Ascending aorta (tissue), 2 donors: ENCODE measurements at regions of chr5 and their contacts with region 1.

Region 1: GRCh38 chr5:179821581-179822432 is 1.1 kb downstream of the SQSTM1 start:
- DNase-seq: peak; percentile 90 to 98
- H3K4me3 ChIP-seq: peak overlapping the region; percentile 84 to 98
- H3K27ac ChIP-seq: peak overlapping the region; percentile 98 to 100
- H3K4me1 ChIP-seq: peaks cover 34 to 47% of the 10 kb centered on the region in 2 donors
- H3K27me3 ChIP-seq: no peaks in the 10 kb centered on the region
- CTCF ChIP-seq: peak in 1 of 3 experiments; percentile 19

Region 2: DNA sequence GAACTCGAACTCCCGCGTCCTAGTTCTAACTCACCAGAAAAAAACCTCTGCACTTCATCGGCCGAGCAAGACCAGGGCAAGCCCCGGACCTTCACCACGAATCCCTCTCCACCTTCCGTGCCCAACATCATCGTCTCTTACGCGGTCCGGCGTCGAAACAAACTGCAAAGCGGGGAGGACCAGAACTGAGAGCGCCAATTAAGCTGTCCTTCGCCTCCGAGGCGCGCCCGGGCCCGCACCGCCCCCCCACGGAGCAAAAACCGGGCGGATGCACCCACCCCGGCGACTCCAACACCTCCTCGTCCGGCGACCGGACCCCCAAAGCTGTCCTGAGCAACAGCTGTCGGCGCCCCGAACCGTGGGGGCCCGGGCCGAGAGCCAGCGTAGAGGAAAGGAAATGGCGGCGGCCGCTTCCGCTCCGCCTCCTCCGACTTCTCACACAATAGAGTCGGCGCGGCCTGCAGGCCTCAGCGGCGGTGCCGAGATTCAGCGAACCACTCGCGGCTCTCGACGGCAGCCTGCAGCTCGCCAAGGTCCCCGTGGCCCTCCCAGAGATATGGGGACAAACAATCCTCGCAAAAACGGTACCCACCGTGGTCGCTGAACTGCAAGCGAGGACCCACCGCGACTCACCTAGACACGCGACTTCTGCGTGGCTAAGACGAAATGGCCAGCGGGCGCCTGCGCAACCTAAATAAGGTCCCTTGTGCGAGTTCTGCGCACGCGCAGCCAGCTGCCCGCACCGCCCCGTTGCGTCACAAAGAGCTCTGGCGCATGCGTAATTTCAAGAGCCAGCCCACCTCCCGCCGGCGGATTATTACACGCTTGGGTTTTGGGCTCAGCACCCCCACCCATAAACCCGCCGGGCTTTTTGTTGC is 198.6 kb before region 1 on chr5 and contains the start of gene HNRNPH1:
- intact Hi-C with region 1: loop called (anchors 2 kb)
- DNase-seq: peak; percentile 93 to 99
- H3K4me3 ChIP-seq: peak within 1 kb of the TSS; percentile 99 to 100
- H3K27ac ChIP-seq: peak within 1 kb of the TSS; percentile 100
- H3K4me1 ChIP-seq: peaks cover 0 to 40% of the 10 kb centered on the region in 2 donors
- H3K27me3 ChIP-seq: no peaks in the 10 kb centered on the region
- CTCF ChIP-seq: peak in 1 of 3 experiments; percentile 5
- total RNA-seq, gene HNRNPH1: 206 TPM

Region 3: GRCh38 chr5:179697993-179698934 is 123.5 kb before region 1 on chr5:
- intact Hi-C with region 1: loop called (anchors 5 kb)
- DNase-seq: peak; percentile 98 to 100
- H3K4me3 ChIP-seq: peak overlapping the region; percentile 90 to 94
- H3K27ac ChIP-seq: peak overlapping the region; percentile 98 to 99
- H3K4me1 ChIP-seq: peaks cover 0 to 11% of the 10 kb centered on the region in 2 donors
- H3K27me3 ChIP-seq: no peaks in the 10 kb centered on the region
- CTCF ChIP-seq: no peak

Region 4: DNA sequence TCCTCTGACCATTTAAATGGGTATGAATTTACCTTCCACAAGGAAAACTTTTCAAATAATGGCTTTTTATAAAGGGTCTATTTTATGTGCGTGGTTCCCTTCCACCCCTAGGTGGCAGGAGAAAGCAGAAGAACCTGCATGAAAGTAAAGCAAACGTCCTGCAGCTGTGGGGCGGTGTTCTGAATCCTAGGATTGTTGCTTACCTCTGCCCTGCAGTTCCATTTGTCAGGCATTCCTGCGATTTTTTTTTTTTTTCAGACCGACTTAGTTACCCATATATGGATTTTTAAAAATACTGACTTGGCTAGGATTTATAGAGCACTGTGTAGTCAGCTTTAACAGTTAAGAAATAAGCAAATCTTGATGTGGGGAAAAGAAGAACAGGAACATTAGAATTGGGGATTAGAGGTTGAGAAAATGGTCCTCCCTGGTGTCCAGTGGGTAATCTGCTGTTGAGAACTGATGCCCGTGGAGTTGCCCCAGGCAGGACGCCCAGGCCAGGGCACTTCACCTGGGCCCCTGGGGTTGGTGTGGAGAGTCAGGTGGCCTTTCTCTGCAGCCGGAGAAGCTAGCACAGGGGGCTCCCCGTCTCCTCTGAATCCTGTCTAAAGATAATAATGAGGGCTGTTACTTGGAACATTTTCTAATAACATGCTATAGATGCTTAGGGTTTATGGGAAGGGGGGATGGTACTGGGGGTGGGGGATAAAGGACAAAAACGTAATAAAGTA is 58.4 kb before region 1 on chr5:
- intact Hi-C with region 1: loop called (anchors 2 kb)
- DNase-seq: peak in 1 of 2 donors; percentile 90
- H3K4me3 ChIP-seq: peak overlapping the region in 1 of 2 donors; percentile 16
- H3K27ac ChIP-seq: peak overlapping the region; percentile 74 to 91
- H3K4me1 ChIP-seq: peaks cover 22 to 52% of the 10 kb centered on the region in 2 donors
- H3K27me3 ChIP-seq: no peaks in the 10 kb centered on the region
- CTCF ChIP-seq: peak; percentile 76 to 91 (median 89)

Region 5: GRCh38 chr5:179806250-179807222 is 15.3 kb before region 1 on chr5 and contains the start of gene MGAT4B:
- intact Hi-C with region 1: loop called (anchors 1 kb)
- DNase-seq: peak in 1 of 2 donors; percentile 84
- H3K4me3 ChIP-seq: peak within 1 kb of the TSS; percentile 78 to 87
- H3K27ac ChIP-seq: peak within 1 kb of the TSS; percentile 91
- H3K4me1 ChIP-seq: peaks cover 10 to 21% of the 10 kb centered on the region in 2 donors
- H3K27me3 ChIP-seq: no peaks in the 10 kb centered on the region
- CTCF ChIP-seq: no peak
- total RNA-seq, gene MGAT4B: 207 TPM

Region 6: DNA sequence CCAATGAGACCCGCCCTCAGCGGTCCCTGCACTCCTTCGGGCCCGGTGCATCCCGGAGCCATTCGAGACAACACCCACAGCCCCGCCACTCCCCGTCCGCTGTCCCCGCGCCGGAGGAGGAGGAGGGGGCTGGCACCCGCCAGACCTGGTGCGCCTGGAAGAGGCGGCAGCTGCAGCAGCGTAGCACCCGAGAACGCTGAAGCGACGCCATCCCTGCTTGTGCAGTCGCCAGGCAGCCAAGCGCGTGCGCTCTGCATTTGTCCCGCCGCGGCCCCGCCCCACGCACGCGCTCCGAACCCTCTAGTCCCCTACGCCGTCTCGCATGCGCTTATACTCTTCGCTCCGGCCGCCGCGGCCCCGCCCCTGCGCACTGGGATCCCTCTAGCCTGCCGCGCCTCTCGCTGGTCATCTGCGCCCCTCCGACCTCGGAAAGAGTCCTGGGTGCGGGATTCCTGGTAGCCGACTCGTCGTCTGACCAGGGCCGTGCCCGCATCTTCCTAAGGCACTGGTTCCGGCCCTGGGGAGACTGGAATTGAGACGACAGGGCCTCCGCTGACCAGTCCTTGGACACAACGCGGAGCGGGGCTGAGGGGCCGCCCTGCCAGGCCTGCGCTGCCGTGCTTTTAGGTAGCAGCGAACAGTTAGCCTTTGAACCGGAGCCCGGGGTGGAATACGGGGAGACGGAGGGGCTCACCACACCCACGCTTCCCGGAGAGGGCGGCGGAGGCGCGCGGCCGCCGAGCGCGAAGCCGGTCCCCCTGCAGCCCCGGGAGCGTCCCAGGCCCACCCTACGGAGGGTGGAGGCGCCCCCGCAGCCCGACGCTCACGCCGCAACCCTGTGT is 37.0 kb after region 1 on chr5 and contains the start of gene MRNIP:
- intact Hi-C with region 1: loop called (anchors 5 kb)
- DNase-seq: peak; percentile 83 to 98
- H3K4me3 ChIP-seq: peak within 1 kb of the TSS; percentile 79 to 93
- H3K27ac ChIP-seq: peak within 1 kb of the TSS; percentile 78 to 86
- H3K4me1 ChIP-seq: peaks cover 0 to 8% of the 10 kb centered on the region in 2 donors
- H3K27me3 ChIP-seq: no peaks in the 10 kb centered on the region
- CTCF ChIP-seq: peak in 1 of 3 experiments; percentile 33
- total RNA-seq, gene MRNIP: 17.3 TPM

Region 7: DNA sequence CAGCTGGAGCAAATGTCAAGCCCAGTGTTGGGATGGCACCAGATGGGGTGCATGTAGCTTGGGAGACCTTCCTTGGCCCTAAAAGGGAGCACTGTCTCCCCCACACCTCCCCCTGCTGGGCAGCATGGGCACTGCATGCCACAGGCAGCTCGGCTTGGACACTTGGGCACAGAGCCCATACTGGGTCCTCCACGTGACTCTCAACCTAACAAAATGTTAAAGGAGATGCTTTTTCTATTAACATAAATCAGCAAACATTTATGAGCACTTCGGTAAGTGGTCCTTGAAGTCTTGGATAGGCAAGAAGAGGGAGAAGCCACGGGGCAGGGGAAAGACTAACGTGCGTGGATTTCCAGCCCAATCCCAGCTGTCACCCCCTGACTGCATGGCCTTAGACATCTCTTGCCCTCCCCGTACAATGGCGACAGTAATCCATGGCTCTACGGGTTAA is 494.0 kb after region 1 on chr5:
- intact Hi-C with region 1: no loop called
- DNase-seq: peak in 1 of 2 donors; percentile 73
- H3K4me3 ChIP-seq: no peak overlapping the region
- H3K27ac ChIP-seq: no peak overlapping the region
- H3K4me1 ChIP-seq: no peaks in the 10 kb centered on the region
- H3K27me3 ChIP-seq: no peaks in the 10 kb centered on the region
- CTCF ChIP-seq: peak; percentile 38 to 79 (median 67)